ENCODE measurements at regions of chr2 and their contacts with region 1.

Region 1: GRCh38 chr2:218876562-218877219 is 4.0 kb upstream of the WNT10A start:
- DNase-seq: no peak
- H3K4me3 ChIP-seq: no peak overlapping the region
- H3K27me3 ChIP-seq: peaks cover 62% of the 10 kb centered on the region
- CTCF ChIP-seq: peak; percentile 94

Region 2: DNA sequence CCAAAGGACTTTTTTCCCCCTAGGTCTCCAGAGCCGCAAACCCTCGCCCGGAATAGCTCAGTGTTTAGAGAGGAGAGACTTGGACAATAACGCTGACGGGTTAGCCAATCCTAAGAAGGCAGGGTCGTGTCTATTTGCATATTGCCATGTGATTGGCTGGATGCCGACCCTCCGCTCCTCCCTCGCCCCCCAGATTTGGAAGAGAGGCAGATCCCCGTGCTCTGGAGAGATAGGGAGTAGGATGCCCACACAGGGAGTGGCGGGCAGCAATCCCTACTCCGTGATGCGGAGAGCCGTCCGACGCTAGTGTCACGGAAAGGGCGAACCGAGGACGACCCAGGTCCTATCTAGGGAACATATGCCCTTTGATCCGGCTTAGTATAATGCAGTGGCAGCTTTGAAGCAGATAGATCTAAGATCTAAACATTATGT is 15.7 kb before region 1 on chr2:
- CTCF ChIA-PET with region 1: interaction called, 83 read pairs
- POLR2A ChIA-PET with region 1: no interaction called
- DNase-seq: no peak
- H3K4me3 ChIP-seq: no peak overlapping the region
- H3K27me3 ChIP-seq: peaks cover 54% of the 10 kb centered on the region
- CTCF ChIP-seq: no peak

Region 3: DNA sequence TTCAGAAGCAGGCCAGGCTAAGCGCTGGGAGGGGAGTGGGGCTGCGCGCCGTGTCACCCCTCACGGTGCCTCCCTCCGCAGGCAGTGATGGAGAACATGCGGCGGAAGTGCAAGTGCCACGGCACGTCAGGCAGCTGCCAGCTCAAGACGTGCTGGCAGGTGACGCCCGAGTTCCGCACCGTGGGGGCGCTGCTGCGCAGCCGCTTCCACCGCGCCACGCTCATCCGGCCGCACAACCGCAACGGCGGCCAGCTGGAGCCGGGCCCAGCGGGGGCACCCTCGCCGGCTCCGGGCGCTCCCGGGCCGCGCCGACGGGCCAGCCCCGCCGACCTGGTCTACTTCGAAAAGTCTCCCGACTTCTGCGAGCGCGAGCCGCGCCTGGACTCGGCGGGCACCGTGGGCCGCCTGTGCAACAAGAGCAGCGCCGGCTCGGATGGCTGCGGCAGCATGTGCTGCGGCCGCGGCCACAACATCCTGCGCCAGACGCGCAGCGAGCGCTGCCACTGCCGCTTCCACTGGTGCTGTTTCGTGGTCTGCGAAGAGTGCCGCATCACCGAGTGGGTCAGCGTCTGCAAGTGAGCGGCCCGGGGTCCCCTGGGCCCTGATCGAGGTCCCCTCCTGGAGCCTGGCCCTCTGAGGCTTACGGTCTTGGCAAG is 16.1 kb after region 1 on chr2:
- CTCF ChIA-PET with region 1: interaction called, 726 read pairs
- POLR2A ChIA-PET with region 1: interaction called, 3 read pairs
- DNase-seq: no peak
- H3K4me3 ChIP-seq: peak overlapping the region; percentile 23; the same call in 1 of the 2 replicates
- H3K27me3 ChIP-seq: peaks cover 32% of the 10 kb centered on the region
- CTCF ChIP-seq: peak; percentile 44

Region 4: GRCh38 chr2:218908721-218909619 is 32.3 kb after region 1 on chr2:
- CTCF ChIA-PET with region 1: interaction called, 726 read pairs
- POLR2A ChIA-PET with region 1: no interaction called
- DNase-seq: peak; percentile 16
- H3K4me3 ChIP-seq: peak overlapping the region; percentile 62
- H3K27me3 ChIP-seq: peaks cover 5% of the 10 kb centered on the region
- CTCF ChIP-seq: no peak

Measured in BJ (cell line).